CD8-positive, alpha-beta T cell (primary cell): ENCODE measurements at regions of chr17 and their contacts with region 1.

Region 1: DNA sequence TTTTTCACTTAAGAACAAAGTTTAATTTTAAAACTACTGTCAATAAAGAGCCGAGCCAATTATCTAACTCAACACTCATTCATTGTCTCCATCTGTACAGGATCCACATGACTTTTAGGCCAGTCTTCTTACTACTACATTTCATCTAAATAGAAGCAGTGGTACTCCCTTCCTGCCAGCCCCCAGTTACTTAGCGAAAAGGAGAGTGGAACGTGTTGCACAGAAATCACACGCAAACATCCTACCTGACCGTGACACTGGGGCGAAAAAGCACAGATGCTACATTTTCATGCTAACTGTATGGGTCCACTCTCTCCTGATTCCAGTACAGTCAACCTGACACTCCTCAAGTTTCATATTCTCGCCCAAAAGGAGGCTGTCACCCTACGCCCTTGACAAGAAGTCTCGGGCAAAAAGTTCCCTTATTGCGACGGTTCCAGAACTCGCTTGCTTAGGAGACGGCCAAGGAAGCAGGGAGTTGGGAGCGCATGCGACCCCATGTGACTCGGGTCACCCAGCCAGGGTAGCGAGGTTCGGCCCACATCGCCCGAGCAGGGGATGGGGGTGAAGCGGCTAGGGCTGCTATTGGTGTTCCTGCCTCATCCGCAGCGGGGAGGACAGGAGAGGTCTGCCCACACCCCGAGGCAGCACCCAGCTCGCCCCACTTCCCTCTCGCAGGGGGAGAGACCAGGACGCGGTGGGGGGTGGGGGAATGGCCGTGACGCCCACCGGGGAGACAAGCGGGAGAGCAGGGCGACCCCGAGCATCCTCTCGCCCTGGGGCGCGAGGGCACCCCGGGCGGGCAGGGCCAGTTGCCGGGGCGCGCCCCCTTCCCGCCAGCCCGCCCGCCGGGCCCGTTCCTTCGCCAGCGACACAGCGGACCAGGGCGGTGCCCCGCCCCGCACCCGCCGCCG is 935 bp downstream of the GNA13 start:
- DNase-seq: peak; percentile 18 to 77 (median 58)
- ATAC-seq: peak; percentile 30
- H3K4me3 ChIP-seq: peak overlapping the region; percentile 87 to 93
- H3K4me3 Mint-ChIP-seq: peak overlapping the region; percentile 98
- H3K27ac ChIP-seq: peak overlapping the region; percentile 95 to 99
- H3K27ac Mint-ChIP-seq: peak overlapping the region; percentile 94
- H3K4me1 ChIP-seq: peaks cover 14% of the 10 kb centered on the region
- H3K4me1 Mint-ChIP-seq: peaks cover 51% of the 10 kb centered on the region
- H3K27me3 ChIP-seq: no peaks in the 10 kb centered on the region
- H3K27me3 Mint-ChIP-seq: no peaks in the 10 kb centered on the region
- CTCF ChIP-seq: no peak

Region 2: GRCh38 chr17:64661976-64662773 is 393.4 kb before region 1 on chr17 and contains the start of gene SMURF2:
- CTCF ChIA-PET with region 1: no interaction called
- POLR2A ChIA-PET with region 1: no interaction called
- intact Hi-C with region 1: loop called in 1 of 2 experiments (anchors 10 kb)
- DNase-seq: peak; percentile 63 to 90 (median 80)
- ATAC-seq: peak; percentile 90
- H3K4me3 ChIP-seq: peak within 1 kb of the TSS; percentile 71 to 79
- H3K4me3 Mint-ChIP-seq: peak within 1 kb of the TSS; percentile 98
- H3K27ac ChIP-seq: peak within 1 kb of the TSS; percentile 56 to 63
- H3K27ac Mint-ChIP-seq: peak within 1 kb of the TSS; percentile 95
- H3K4me1 ChIP-seq: peaks cover 31% of the 10 kb centered on the region
- H3K4me1 Mint-ChIP-seq: peaks cover 44% of the 10 kb centered on the region
- H3K27me3 ChIP-seq: no peaks in the 10 kb centered on the region
- H3K27me3 Mint-ChIP-seq: no peaks in the 10 kb centered on the region
- CTCF ChIP-seq: no peak
- total RNA-seq, gene SMURF2: 27.3 to 28.1 TPM

Region 3: DNA sequence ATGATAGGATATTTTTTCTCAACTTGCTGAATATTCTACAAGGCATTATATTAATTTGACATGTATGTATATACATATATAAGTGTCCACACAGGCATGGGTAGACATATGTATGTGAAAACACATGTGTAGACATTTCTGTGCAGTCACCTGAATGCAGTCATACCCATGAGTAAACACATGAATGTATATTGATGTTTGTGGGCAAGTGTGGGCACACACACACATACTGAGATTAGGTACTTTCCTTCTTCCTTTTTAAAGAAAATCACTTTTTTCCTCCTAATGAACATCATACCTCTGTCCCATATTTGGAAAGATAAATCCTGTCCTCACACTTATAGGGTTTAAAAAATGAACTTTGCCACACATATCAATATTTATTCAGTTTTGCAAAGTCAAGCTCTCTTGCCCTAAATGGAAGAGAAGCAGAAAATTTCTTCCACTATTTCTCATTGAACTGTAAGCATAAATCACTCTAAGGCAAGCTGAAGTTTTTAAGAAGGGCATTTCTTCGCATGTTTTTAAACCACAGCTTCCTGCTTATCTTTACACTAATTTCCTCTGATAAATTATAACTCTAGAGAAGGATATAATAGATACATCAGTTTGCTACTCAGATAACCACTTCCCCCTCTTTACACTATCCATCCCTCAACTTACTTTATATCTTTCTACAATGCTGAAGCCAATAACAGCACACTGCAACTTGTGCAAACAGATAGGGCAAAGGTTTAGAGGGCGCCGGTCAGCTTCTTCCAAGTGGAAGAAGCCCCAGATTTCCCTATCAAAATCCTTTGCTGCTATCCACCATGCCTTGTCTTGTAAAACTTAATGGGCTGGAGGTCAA is 86.7 kb before region 1 on chr17:
- CTCF ChIA-PET with region 1: no interaction called
- POLR2A ChIA-PET with region 1: interaction called, 4 read pairs
- intact Hi-C with region 1: loop called in 1 of 2 experiments (anchors 5 kb)
- DNase-seq: peak in 2 of 9 experiments; percentile 53 to 72
- ATAC-seq: peak; percentile 15
- H3K4me3 ChIP-seq: no peak overlapping the region
- H3K4me3 Mint-ChIP-seq: peak overlapping the region; percentile 42
- H3K27ac ChIP-seq: peak overlapping the region; percentile 53 to 92
- H3K27ac Mint-ChIP-seq: peak overlapping the region; percentile 92
- H3K4me1 ChIP-seq: peaks cover 51% of the 10 kb centered on the region
- H3K4me1 Mint-ChIP-seq: peaks cover 65% of the 10 kb centered on the region
- H3K27me3 ChIP-seq: no peaks in the 10 kb centered on the region
- H3K27me3 Mint-ChIP-seq: no peaks in the 10 kb centered on the region
- CTCF ChIP-seq: no peak

Region 4: DNA sequence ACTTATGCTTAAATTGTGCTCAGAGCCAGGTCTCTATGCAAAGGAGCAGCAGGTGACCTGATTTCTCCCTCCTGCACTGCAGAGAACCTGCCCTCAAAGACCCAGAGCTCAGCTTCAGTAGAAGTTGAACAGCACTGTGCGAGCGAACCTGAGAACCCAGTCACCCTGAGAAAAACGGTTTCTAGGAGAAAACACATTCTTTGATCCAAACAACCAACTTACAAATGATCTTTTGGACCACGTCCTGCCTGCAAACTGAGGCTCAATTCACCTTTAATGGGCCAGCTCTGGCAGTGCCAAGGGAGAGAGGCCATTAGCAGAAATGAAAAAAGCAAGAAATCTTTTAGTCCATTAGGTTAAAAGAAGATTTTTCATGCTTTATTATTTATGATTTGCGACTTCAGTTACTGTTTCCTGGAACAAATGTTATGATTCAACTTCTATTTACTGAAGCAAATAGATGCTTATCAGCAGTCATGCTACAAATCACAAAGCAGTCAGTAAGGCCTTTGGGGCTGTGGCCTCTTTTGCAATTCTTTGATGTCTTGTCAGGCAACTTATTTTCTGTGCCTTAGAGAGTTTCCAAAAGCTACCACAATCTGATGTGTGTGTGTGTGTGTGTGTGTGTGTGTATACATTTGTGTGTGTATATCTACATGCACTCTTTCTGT is 70.6 kb before region 1 on chr17:
- CTCF ChIA-PET with region 1: interaction called, 3 read pairs
- POLR2A ChIA-PET with region 1: interaction called, 5 read pairs
- intact Hi-C with region 1: loop called in 1 of 2 experiments (anchors 2 kb)
- DNase-seq: peak in 8 of 9 experiments; percentile 30 to 87 (median 60)
- ATAC-seq: peak; percentile 48
- H3K4me3 ChIP-seq: peak overlapping the region; percentile 42 to 43
- H3K4me3 Mint-ChIP-seq: peak overlapping the region; percentile 76
- H3K27ac ChIP-seq: peak overlapping the region; percentile 82 to 99
- H3K27ac Mint-ChIP-seq: peak overlapping the region; percentile 99
- H3K4me1 ChIP-seq: peaks cover 34% of the 10 kb centered on the region
- H3K4me1 Mint-ChIP-seq: peaks cover 35% of the 10 kb centered on the region
- H3K27me3 ChIP-seq: no peaks in the 10 kb centered on the region
- H3K27me3 Mint-ChIP-seq: no peaks in the 10 kb centered on the region
- CTCF ChIP-seq: no peak

Region 5: GRCh38 chr17:65027305-65027704 is 28.3 kb before region 1 on chr17:
- CTCF ChIA-PET with region 1: no interaction called
- POLR2A ChIA-PET with region 1: no interaction called
- intact Hi-C with region 1: loop called (anchors 1 kb)
- DNase-seq: peak in 5 of 9 experiments; percentile 49 to 80 (median 66)
- ATAC-seq: peak; percentile 81
- H3K4me3 ChIP-seq: no peak overlapping the region
- H3K4me3 Mint-ChIP-seq: peak overlapping the region; percentile 45
- H3K27ac ChIP-seq: peak overlapping the region in 1 of 2 experiments; percentile 55
- H3K27ac Mint-ChIP-seq: peak overlapping the region; percentile 75
- H3K4me1 ChIP-seq: peaks cover 63% of the 10 kb centered on the region
- H3K4me1 Mint-ChIP-seq: peaks cover 87% of the 10 kb centered on the region
- H3K27me3 ChIP-seq: no peaks in the 10 kb centered on the region
- H3K27me3 Mint-ChIP-seq: no peaks in the 10 kb centered on the region
- CTCF ChIP-seq: peak; percentile 59

Region 6: GRCh38 chr17:65100316-65101140 is 44.9 kb after region 1 on chr17:
- CTCF ChIA-PET with region 1: interaction called, 4 read pairs
- POLR2A ChIA-PET with region 1: interaction called, 5 read pairs
- intact Hi-C with region 1: loop called (anchors 1 kb)
- DNase-seq: peak; percentile 62 to 90 (median 82)
- ATAC-seq: peak; percentile 87
- H3K4me3 ChIP-seq: peak overlapping the region; percentile 38 to 62
- H3K4me3 Mint-ChIP-seq: peak overlapping the region; percentile 84
- H3K27ac ChIP-seq: peak overlapping the region; percentile 36 to 65
- H3K27ac Mint-ChIP-seq: peak overlapping the region; percentile 88
- H3K4me1 ChIP-seq: peaks cover 11% of the 10 kb centered on the region
- H3K4me1 Mint-ChIP-seq: peaks cover 19% of the 10 kb centered on the region
- H3K27me3 ChIP-seq: no peaks in the 10 kb centered on the region
- H3K27me3 Mint-ChIP-seq: no peaks in the 10 kb centered on the region
- CTCF ChIP-seq: peak; percentile 72

Region 7: GRCh38 chr17:65137021-65137991 is 81.7 kb after region 1 on chr17 and contains the start of gene RGS9:
- CTCF ChIA-PET with region 1: no interaction called
- POLR2A ChIA-PET with region 1: no interaction called
- intact Hi-C with region 1: loop called in 1 of 2 experiments (anchors 2 kb)
- DNase-seq: peak; percentile 68 to 93 (median 86)
- ATAC-seq: peak; percentile 99
- H3K4me3 ChIP-seq: peak within 1 kb of the TSS; percentile 59 to 65
- H3K4me3 Mint-ChIP-seq: peak within 1 kb of the TSS; percentile 77
- H3K27ac ChIP-seq: peak within 1 kb of the TSS in 1 of 2 experiments; percentile 43
- H3K27ac Mint-ChIP-seq: no peak within 1 kb of the TSS
- H3K4me1 ChIP-seq: peaks cover 24% of the 10 kb centered on the region
- H3K4me1 Mint-ChIP-seq: peaks cover 28% of the 10 kb centered on the region
- H3K27me3 ChIP-seq: peaks cover 0 to 2% of the 10 kb centered on the region in 2 experiments
- H3K27me3 Mint-ChIP-seq: peaks cover 16% of the 10 kb centered on the region
- CTCF ChIP-seq: peak; percentile 97
- total RNA-seq, gene RGS9: 1.1 to 1.6 TPM